CD4-positive, alpha-beta T cell (primary cell): ENCODE measurements at regions of chr1 and their contacts with region 1.

Region 1: DNA sequence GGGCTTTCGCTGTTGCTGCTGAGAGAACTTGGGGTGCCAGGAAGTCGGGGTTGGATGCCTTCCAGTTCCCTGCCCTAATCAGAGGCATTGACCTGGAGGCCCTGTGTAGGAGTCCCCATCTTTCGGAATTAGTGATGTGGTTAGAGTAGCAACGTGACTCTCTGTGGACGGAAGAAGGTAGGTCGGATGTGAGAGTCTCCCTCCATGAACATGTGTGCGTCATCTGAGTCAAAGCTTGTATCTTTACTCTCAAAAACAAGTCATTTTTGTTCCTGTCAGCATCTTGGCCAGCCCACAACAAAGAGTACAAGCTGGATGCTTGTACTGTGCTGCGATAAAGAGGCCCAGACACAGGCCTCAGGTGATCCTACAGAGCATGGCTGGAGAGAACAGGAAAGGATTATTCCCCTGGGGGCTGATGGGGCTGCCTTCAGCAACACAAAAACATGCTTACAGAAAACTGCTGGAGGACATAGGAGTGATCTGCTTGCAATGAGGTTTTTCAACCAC is 31.0 kb upstream of the IL10 start:
- DNase-seq: peak; percentile 61 to 97 (median 70)
- ATAC-seq: peak; percentile 89
- H3K4me3 ChIP-seq: no peak overlapping the region
- H3K4me3 Mint-ChIP-seq: peak overlapping the region; percentile 7
- H3K27ac ChIP-seq: peak overlapping the region; percentile 58 to 80
- H3K27ac Mint-ChIP-seq: peak overlapping the region; percentile 87
- H3K4me1 ChIP-seq: peaks cover 59% of the 10 kb centered on the region
- H3K4me1 Mint-ChIP-seq: peaks cover 73% of the 10 kb centered on the region
- H3K27me3 ChIP-seq: no peaks in the 10 kb centered on the region
- H3K27me3 Mint-ChIP-seq: no peaks in the 10 kb centered on the region
- CTCF ChIP-seq: no peak

Region 2: DNA sequence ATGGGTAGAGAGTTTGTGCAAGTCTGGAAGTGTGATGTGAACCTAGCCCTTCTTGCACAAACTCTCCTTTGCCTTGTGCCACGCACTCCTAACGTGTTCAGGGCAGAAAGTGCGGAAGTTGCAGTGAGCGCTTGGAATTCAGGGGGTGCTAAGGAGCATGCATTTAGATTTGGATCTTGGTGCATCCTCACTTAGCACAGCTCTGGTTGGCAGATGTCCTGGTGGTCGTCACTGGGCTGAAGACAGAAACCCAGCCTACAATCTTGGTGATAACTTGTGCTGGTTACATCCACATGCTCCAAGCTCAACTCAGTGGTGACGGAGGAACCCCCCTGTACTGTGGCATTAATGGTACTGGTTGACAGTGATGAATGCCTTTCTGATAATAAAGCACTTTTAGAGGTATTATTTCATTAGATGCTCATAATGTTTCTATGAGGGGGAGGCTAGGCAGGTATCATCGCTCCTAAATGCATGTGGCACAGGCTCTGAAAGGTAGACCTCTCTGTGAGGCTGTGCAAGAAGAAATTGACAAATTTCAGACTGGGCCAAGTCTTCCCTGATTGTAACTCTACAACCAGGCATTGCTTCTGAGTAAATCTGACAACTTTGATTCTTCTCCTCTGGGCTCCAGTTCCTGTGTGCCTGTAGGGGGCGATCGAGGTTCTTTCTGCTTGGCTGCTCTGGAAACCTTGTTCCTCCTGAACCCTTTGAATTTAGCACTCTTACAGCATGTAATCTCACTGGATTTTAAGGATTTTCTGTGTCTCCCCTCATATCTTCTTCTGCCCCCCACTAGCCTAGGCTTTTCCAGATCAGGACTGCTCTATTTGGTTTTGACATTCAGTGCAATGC is 77.9 kb before region 1 on chr1:
- CTCF ChIA-PET with region 1: interaction called, 20 read pairs
- POLR2A ChIA-PET with region 1: interaction called, 4 read pairs
- intact Hi-C with region 1: no loop called
- DNase-seq: peak; percentile 40 to 82 (median 55)
- ATAC-seq: peak; percentile 54
- H3K4me3 ChIP-seq: no peak overlapping the region
- H3K4me3 Mint-ChIP-seq: no peak overlapping the region
- H3K27ac ChIP-seq: no peak overlapping the region
- H3K27ac Mint-ChIP-seq: peak overlapping the region; percentile 62
- H3K4me1 ChIP-seq: peaks cover 51% of the 10 kb centered on the region
- H3K4me1 Mint-ChIP-seq: peaks cover 50% of the 10 kb centered on the region
- H3K27me3 ChIP-seq: no peaks in the 10 kb centered on the region
- H3K27me3 Mint-ChIP-seq: no peaks in the 10 kb centered on the region
- CTCF ChIP-seq: peak; percentile 47

Region 3: GRCh38 chr1:206761159-206761768 is 42.0 kb before region 1 on chr1:
- CTCF ChIA-PET with region 1: interaction called, 3 read pairs
- POLR2A ChIA-PET with region 1: interaction called, 42 read pairs
- intact Hi-C with region 1: loop called in 1 of 2 experiments (anchors 1 kb)
- DNase-seq: no peak
- ATAC-seq: no peak
- H3K4me3 ChIP-seq: no peak overlapping the region
- H3K4me3 Mint-ChIP-seq: no peak overlapping the region
- H3K27ac ChIP-seq: no peak overlapping the region
- H3K27ac Mint-ChIP-seq: no peak overlapping the region
- H3K4me1 ChIP-seq: peaks cover 34% of the 10 kb centered on the region
- H3K4me1 Mint-ChIP-seq: peaks cover 39% of the 10 kb centered on the region
- H3K27me3 ChIP-seq: no peaks in the 10 kb centered on the region
- H3K27me3 Mint-ChIP-seq: no peaks in the 10 kb centered on the region
- CTCF ChIP-seq: no peak

Region 4: DNA sequence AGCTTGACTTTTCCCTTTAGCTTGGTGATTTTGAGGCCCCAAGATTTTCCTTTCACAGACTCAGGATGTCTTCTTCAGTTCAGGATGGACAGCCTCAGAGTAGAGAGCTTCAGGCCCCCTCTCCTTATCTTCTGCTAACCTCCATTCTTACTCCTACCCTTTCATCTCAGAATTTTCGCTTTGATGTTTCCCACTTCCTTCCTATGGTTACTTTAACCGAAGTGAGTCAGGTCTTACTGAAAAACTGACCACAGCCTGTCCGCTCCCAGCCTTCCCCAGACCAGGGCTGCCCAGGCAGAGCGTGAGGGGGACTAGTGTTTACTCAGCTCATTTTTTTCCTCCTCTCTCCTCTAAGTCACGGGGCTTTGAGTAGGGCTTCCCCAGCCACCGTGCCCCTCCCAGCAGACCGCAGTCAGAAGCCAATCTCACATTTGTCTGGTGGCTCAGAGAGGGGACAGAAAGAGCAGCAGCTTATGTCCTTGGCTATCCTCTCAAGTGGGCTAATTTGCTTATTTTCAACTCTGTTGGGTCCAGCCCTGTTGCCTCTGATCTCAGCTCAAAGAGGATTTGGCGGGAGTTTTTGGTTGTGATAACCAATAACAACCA is 36.9 kb before region 1 on chr1:
- CTCF ChIA-PET with region 1: interaction called, 12 read pairs
- POLR2A ChIA-PET with region 1: interaction called, 42 read pairs
- intact Hi-C with region 1: loop called (anchors 2 kb)
- DNase-seq: peak; percentile 48 to 90 (median 66)
- ATAC-seq: peak; percentile 84
- H3K4me3 ChIP-seq: no peak overlapping the region
- H3K4me3 Mint-ChIP-seq: peak overlapping the region; percentile 84
- H3K27ac ChIP-seq: no peak overlapping the region
- H3K27ac Mint-ChIP-seq: peak overlapping the region; percentile 88
- H3K4me1 ChIP-seq: peaks cover 64% of the 10 kb centered on the region
- H3K4me1 Mint-ChIP-seq: peaks cover 74% of the 10 kb centered on the region
- H3K27me3 ChIP-seq: no peaks in the 10 kb centered on the region
- H3K27me3 Mint-ChIP-seq: no peaks in the 10 kb centered on the region
- CTCF ChIP-seq: no peak

Region 5: DNA sequence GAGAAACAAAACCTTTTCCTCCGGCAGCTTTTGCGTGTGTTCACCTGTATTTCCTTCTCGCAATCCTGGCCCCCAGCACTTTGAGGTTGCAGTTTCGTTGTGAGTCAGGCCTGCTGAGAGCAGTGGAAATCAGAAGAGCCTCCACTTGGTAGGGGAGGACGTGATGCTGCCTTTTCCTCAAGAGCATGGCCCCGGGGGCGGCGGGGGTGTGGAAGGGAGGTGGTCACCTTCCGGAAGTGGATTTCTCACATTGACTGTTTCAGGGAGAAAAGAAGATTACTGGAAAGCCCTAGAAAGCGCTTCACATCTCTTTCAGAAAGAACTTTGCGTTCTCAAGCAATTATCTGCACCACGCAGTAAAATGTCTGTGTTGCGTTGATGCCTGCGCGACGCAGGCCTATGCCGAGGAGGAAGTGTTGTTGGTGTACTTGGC is 18.8 kb before region 1 on chr1:
- CTCF ChIA-PET with region 1: interaction called, 3 read pairs
- POLR2A ChIA-PET with region 1: interaction called, 7 read pairs
- intact Hi-C with region 1: loop called in 1 of 2 experiments (anchors 2 kb)
- DNase-seq: peak; percentile 47 to 86 (median 66)
- ATAC-seq: peak; percentile 92
- H3K4me3 ChIP-seq: peak overlapping the region; percentile 15
- H3K4me3 Mint-ChIP-seq: peak overlapping the region; percentile 40
- H3K27ac ChIP-seq: peak overlapping the region in 1 of 2 donors; percentile 49
- H3K27ac Mint-ChIP-seq: peak overlapping the region; percentile 74
- H3K4me1 ChIP-seq: peaks cover 45% of the 10 kb centered on the region
- H3K4me1 Mint-ChIP-seq: peaks cover 60% of the 10 kb centered on the region
- H3K27me3 ChIP-seq: no peaks in the 10 kb centered on the region
- H3K27me3 Mint-ChIP-seq: no peaks in the 10 kb centered on the region
- CTCF ChIP-seq: no peak

Region 6: DNA sequence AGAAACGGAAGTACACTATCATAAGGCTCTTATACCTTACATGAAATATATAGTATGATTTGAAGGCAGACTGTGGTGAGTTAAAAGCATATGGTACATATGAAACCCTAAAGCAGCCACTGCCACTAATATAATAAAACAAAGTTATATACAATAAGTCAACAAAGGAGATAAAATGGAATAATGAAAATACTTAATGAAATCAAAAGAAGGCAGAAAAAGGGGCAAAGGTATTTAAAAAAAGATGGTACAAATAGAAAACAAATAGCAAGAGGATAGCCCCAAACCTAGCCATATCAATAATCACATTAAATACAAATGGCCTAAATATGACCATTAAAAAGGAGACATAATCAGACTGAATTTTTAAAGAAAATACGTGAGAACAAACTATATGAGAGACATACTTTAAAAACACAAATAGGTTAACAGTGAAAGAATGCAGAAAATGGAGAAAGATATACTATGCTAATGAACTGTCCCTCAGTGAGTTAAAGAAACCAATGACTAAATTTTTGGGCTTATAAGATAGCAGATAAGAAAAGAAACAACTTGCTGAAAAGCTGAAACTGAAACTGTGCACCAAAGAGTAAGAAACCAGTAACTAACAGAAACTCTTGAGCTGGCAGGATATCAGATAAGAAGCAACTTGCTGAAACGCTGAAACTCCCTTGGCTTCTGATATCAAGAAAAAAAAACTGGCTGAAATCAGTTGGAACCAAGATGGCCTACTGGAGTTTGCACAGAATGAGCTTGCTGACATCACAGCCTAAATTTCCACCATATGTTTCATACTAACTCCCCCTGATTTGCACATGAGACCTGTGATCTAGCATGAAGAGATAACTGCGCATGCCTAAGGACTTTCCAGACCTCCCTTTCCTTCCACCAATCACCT is 13.4 kb after region 1 on chr1:
- CTCF ChIA-PET with region 1: no interaction called
- POLR2A ChIA-PET with region 1: interaction called, 12 read pairs
- intact Hi-C with region 1: no loop called
- DNase-seq: peak in 3 of 14 experiments; percentile 77 to 80 (median 77)
- ATAC-seq: peak; percentile 92
- H3K4me3 ChIP-seq: no peak overlapping the region
- H3K4me3 Mint-ChIP-seq: peak overlapping the region; percentile 54
- H3K27ac ChIP-seq: peak overlapping the region in 1 of 2 donors; percentile 61
- H3K27ac Mint-ChIP-seq: peak overlapping the region; percentile 79
- H3K4me1 ChIP-seq: peaks cover 7% of the 10 kb centered on the region
- H3K4me1 Mint-ChIP-seq: peaks cover 30% of the 10 kb centered on the region
- H3K27me3 ChIP-seq: no peaks in the 10 kb centered on the region
- H3K27me3 Mint-ChIP-seq: no peaks in the 10 kb centered on the region
- CTCF ChIP-seq: no peak

Region 7: DNA sequence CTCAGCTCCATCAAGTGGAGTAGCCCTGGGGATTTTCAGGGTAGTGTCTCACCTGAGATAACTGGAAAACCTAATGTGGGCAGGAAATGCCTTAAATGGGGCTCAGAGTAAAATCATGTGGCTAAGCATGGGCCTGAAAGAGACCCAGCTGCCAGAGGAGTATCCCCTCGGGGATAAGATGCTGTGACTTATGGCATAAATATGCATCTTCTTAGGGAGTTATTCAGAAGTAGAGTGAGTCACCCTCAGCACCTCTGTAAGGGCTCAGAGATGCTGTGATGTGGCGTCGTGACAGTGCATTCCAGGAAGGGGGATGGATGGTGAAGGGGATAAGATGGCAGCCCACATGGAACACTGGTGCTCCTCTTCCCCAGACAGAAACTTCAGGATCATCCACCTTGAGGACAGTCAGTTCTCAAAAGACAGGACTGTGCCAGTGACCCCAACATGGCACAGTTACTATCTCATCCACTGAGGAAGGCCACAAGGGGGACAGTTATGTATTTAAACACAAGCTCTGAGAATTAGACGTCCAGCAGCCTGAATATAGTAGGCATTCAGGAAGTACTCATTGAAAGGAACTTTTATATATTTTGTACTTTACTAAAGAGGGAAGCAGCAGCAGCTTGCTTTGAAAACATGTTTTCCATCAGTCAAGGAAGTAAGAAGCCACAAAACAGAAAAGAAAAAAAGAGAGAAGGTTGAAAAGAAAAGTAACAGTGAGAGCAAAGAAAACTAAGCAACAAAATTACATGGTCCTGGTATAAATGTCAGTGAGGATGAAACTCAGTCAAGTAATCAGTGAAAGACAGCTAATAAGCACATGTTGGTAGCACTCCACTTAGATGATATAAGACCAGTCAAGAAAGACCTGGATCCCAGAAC is 102.2 kb after region 1 on chr1:
- CTCF ChIA-PET with region 1: interaction called, 3 read pairs
- POLR2A ChIA-PET with region 1: interaction called, 13 read pairs
- intact Hi-C with region 1: loop called in 1 of 2 experiments (anchors 2 kb)
- DNase-seq: peak in 5 of 14 experiments; percentile 29 to 56 (median 40)
- ATAC-seq: peak; percentile 31
- H3K4me3 ChIP-seq: no peak overlapping the region
- H3K4me3 Mint-ChIP-seq: peak overlapping the region; percentile 70
- H3K27ac ChIP-seq: peak overlapping the region; percentile 29 to 42
- H3K27ac Mint-ChIP-seq: peak overlapping the region; percentile 90
- H3K4me1 ChIP-seq: peaks cover 68% of the 10 kb centered on the region
- H3K4me1 Mint-ChIP-seq: peaks cover 90% of the 10 kb centered on the region
- H3K27me3 ChIP-seq: no peaks in the 10 kb centered on the region
- H3K27me3 Mint-ChIP-seq: no peaks in the 10 kb centered on the region
- CTCF ChIP-seq: no peak

Region 8: GRCh38 chr1:206967096-206967849 is 164.0 kb after region 1 on chr1:
- CTCF ChIA-PET with region 1: no interaction called
- POLR2A ChIA-PET with region 1: no interaction called
- intact Hi-C with region 1: no loop called
- DNase-seq: peak in 3 of 14 experiments; percentile 32 to 51 (median 45)
- ATAC-seq: peak; percentile 29
- H3K4me3 ChIP-seq: no peak overlapping the region
- H3K4me3 Mint-ChIP-seq: peak overlapping the region; percentile 21
- H3K27ac ChIP-seq: no peak overlapping the region
- H3K27ac Mint-ChIP-seq: no peak overlapping the region
- H3K4me1 ChIP-seq: peaks cover 18% of the 10 kb centered on the region
- H3K4me1 Mint-ChIP-seq: peaks cover 30% of the 10 kb centered on the region
- H3K27me3 ChIP-seq: no peaks in the 10 kb centered on the region
- H3K27me3 Mint-ChIP-seq: no peaks in the 10 kb centered on the region
- CTCF ChIP-seq: no peak

Region 9: DNA sequence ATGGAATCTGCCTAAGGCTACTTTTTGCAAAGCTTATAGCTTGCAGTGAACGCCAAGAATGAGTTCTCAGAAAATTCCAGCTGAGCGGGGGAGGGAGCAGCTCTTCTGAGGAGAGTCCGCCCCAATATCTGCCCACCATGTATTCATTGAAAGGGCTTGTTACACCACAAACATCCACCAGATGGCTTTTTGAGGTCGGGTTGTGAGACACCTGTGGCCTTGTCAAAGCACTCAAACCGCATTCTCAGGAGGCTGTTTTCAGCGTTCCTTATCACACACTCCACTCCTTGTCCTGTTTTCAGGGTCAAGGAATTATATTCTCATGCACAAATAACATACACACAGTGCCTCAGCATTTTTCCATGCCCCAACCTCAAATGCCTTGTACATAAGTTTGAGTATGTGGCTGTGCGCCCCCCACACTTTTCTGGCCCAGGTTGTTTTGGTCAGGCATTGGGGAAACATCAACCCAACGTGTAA is 281.5 kb after region 1 on chr1:
- CTCF ChIA-PET with region 1: no interaction called
- POLR2A ChIA-PET with region 1: no interaction called
- intact Hi-C with region 1: no loop called
- DNase-seq: peak; percentile 19 to 83 (median 40)
- ATAC-seq: peak; percentile 77
- H3K4me3 ChIP-seq: no peak overlapping the region
- H3K4me3 Mint-ChIP-seq: no peak overlapping the region
- H3K27ac ChIP-seq: no peak overlapping the region
- H3K27ac Mint-ChIP-seq: no peak overlapping the region
- H3K4me1 ChIP-seq: peaks cover 10% of the 10 kb centered on the region
- H3K4me1 Mint-ChIP-seq: peaks cover 21% of the 10 kb centered on the region
- H3K27me3 ChIP-seq: no peaks in the 10 kb centered on the region
- H3K27me3 Mint-ChIP-seq: peaks cover 35% of the 10 kb centered on the region
- CTCF ChIP-seq: peak; percentile 68